HCT116 (cell line): ENCODE measurements at regions of chr1 and their contacts with region 1.

Region 1: DNA sequence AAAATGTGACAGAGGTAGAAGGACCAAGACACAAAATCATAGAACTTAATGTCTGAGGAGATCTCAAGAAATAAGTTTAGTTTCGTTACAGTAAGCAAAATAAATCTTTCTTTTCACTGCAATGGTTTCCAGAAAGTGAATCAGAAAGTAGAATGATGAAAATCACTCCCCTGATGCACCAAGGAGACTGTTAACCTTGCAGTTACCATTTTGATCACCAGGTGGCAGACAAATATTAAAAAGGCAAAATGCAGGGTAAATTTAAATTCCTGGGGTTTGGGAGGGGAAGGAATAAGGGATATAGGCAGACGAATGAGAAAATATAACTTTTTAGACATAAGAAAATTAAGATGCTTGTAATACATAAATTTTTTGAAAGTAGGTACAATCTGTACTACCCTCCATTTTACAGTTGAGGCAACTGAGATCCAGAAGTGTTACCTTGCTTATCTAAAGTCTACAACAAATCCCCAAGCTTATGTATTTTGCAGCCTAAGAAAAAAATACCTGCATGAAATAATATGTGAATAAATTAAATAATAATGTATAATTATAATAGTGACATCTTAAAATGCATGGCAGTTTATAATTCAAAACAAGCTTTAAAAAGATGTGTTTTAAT is 253.2 kb downstream of the CRB1 start:
- DNase-seq: peak; percentile 16
- ATAC-seq: peak; percentile 60; the same call in 1 of the 2 replicates
- H3K4me3 ChIP-seq: no peak overlapping the region
- H3K27ac ChIP-seq: no peak overlapping the region
- H3K4me1 ChIP-seq: no peaks in the 10 kb centered on the region
- H3K27me3 ChIP-seq: no peaks in the 10 kb centered on the region
- CTCF ChIP-seq: peak; percentile 45 to 77 (median 63); a peak in 5 of 6 replicates
- POLR2A ChIP-seq: no peak
- RAD21 ChIP-seq: peak; percentile 61

Region 2: GRCh38 chr1:197252973-197253372 is 268.3 kb before region 1 on chr1:
- CTCF ChIA-PET with region 1: no interaction called
- POLR2A ChIA-PET with region 1: no interaction called
- RAD21 ChIA-PET with region 1: no interaction called
- intact Hi-C with region 1: no loop called
- DNase-seq: no peak
- ATAC-seq: no peak
- H3K4me3 ChIP-seq: no peak overlapping the region
- H3K27ac ChIP-seq: no peak overlapping the region
- H3K4me1 ChIP-seq: no peaks in the 10 kb centered on the region
- H3K27me3 ChIP-seq: no peaks in the 10 kb centered on the region
- CTCF ChIP-seq: no peak
- POLR2A ChIP-seq: no peak
- RAD21 ChIP-seq: no peak

Region 3: DNA sequence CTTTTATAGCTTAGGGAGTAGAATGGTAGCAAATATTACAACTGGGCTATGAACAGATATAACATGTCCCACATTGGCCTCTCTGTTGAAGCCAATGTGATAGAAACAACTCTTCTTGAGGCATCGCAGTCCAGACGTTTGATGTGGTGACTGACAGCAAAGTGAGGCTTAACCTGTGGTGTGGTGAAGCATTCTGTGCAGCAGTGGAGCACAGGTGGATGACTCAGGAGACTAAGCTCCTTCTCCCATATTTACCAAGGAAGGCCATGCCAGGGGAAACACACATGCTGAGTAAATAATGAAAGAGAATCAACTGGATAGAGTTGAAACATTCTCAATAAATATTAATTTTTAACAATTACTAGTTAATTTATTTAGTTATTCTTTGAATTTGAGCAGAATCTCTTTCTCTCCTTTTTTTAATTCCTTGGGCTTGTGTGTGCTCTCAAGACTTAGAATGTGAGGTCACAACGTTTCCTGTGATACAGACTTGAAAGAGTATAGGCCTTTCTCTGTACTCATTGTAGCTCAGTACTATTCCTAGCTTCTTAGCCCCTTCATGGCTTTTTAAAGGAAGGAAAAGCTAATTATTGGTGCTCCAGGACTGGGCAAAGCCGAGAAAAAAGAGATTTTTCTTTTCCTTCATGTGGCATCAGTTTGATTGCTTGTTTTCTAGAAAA is 235.6 kb before region 1 on chr1:
- CTCF ChIA-PET with region 1: no interaction called
- POLR2A ChIA-PET with region 1: no interaction called
- RAD21 ChIA-PET with region 1: no interaction called
- intact Hi-C with region 1: no loop called
- DNase-seq: no peak
- ATAC-seq: no peak
- H3K4me3 ChIP-seq: no peak overlapping the region
- H3K27ac ChIP-seq: no peak overlapping the region
- H3K4me1 ChIP-seq: no peaks in the 10 kb centered on the region
- H3K27me3 ChIP-seq: no peaks in the 10 kb centered on the region
- CTCF ChIP-seq: no peak
- POLR2A ChIP-seq: no peak
- RAD21 ChIP-seq: no peak

Region 4: DNA sequence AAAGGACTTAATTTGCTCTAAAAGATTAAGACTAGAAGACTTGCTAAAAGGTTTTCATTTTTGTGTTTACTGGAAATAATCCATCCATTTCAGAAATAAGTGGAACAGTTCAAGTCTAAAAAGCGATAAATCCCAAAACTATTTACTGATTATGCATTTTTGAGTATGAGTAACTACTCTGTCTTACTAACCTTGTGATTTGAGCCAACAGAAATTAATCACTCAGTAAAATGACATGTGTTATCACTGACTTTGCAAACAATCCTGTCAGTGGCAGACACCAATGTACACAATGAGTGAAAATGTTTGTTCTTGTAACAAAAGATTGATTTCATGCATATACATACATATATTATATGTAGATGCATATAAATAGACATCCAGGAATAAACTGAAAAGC is 36.1 kb after region 1 on chr1:
- CTCF ChIA-PET with region 1: no interaction called
- POLR2A ChIA-PET with region 1: no interaction called
- RAD21 ChIA-PET with region 1: no interaction called
- intact Hi-C with region 1: no loop called
- DNase-seq: no peak
- ATAC-seq: no peak
- H3K4me3 ChIP-seq: no peak overlapping the region
- H3K27ac ChIP-seq: no peak overlapping the region
- H3K4me1 ChIP-seq: no peaks in the 10 kb centered on the region
- H3K27me3 ChIP-seq: no peaks in the 10 kb centered on the region
- CTCF ChIP-seq: no peak
- POLR2A ChIP-seq: no peak
- RAD21 ChIP-seq: no peak

Region 5: GRCh38 chr1:197924516-197925123 is 403.4 kb after region 1 on chr1:
- CTCF ChIA-PET with region 1: interaction called, 11 read pairs
- POLR2A ChIA-PET with region 1: no interaction called
- RAD21 ChIA-PET with region 1: interaction called in 1 of 2 experiments, 3 read pairs
- intact Hi-C with region 1: loop called (anchors 2 kb)
- DNase-seq: peak; percentile 51
- ATAC-seq: peak; percentile 96
- H3K4me3 ChIP-seq: no peak overlapping the region
- H3K27ac ChIP-seq: no peak overlapping the region
- H3K4me1 ChIP-seq: no peaks in the 10 kb centered on the region
- H3K27me3 ChIP-seq: no peaks in the 10 kb centered on the region
- CTCF ChIP-seq: peak; percentile 77 to 88 (median 84)
- POLR2A ChIP-seq: no peak
- RAD21 ChIP-seq: peak; percentile 86

Region 6: DNA sequence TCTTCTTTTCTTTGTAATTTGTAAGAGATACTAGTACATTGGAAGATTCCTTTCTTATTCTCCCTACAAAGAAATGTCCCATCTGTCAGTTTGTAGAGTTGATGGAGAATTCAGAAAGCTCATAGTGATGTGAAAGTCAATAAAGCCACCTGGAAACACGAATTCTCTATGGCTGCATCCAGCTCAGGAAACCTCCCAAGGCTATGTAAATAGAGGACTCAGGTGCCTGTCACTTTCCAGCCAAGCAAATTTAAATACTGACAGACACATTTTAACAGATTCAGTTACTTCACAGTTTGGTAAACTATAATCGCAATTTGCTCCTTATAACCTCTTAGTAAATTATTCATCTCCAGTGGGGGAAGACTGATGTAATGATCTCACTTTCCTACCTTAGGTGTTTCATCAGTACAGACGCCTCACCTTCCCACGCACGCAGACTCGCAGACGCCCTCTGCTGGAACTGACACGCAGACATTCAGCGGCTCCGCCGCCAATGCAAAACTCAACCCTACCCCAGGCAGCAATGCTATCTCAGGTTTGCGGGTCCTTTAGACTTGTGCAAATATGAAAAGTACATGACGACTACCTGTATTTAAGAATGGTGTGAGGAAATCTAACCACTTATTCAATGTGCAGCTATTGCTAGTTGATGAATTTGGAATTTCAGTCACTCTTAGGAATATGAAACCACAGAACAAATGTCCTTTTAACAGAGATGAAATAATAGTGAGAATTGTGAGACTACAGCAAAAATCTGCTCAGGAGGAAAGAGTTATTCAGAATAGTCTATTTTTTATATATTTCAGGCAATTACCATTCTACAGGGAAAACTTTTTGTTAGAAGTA is 1178.2 kb after region 1 on chr1:
- CTCF ChIA-PET with region 1: interaction called, 3 read pairs
- POLR2A ChIA-PET with region 1: no interaction called
- RAD21 ChIA-PET with region 1: no interaction called
- intact Hi-C with region 1: loop called (anchors 5 kb)
- DNase-seq: peak; percentile 59
- ATAC-seq: peak; percentile 100
- H3K4me3 ChIP-seq: peak overlapping the region in 1 of 2 experiments; percentile 23; a peak in 1 of 4 replicates
- H3K27ac ChIP-seq: no peak overlapping the region
- H3K4me1 ChIP-seq: peaks cover 0 to 8% of the 10 kb centered on the region in 2 experiments; a peak in 1 of 4 replicates
- H3K27me3 ChIP-seq: no peaks in the 10 kb centered on the region
- CTCF ChIP-seq: peak; percentile 53 to 92 (median 89)
- POLR2A ChIP-seq: no peak
- RAD21 ChIP-seq: peak; percentile 64